ENCODE measurements at regions of chr5 and their contacts with region 1.

Region 1: GRCh38 chr5:157596487-157596886 is 20.9 kb upstream of the ADAM19 start:
- DNase-seq: peak; percentile 54
- ATAC-seq: peak; percentile 62
- H3K4me3 Mint-ChIP-seq: no peak overlapping the region
- H3K27ac Mint-ChIP-seq: peak overlapping the region; percentile 79
- H3K4me1 Mint-ChIP-seq: peaks cover 94% of the 10 kb centered on the region
- H3K27me3 Mint-ChIP-seq: no peaks in the 10 kb centered on the region

Region 2: DNA sequence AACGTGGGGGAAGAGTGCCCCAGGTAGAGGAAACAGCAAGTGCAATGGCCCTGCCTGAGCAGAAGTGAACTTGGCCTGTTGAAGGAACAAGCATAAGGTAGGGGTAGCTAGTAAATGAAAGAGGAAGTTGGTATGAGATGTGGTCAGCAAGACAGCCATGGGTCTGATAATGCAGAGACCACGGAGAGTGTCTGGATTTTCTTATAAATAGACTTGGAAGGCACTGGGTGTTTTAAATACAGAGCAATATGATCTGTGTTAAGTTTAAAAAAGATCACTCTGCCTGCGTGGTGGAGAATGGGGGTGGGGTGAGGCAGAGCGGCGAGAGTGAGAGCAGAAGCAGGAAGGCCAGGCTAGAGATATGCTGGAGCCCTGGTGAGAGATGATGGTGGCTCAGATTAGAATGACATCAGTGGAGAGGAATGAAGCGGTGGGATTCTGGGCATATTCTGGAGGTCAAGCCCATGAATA is 25.1 kb before region 1 on chr5:
- CTCF ChIA-PET with region 1: interaction called, 10 read pairs
- POLR2A ChIA-PET with region 1: no interaction called
- DNase-seq: peak; percentile 68
- ATAC-seq: peak; percentile 59
- H3K4me3 Mint-ChIP-seq: peak overlapping the region; percentile 92
- H3K27ac Mint-ChIP-seq: peak overlapping the region; percentile 92
- H3K4me1 Mint-ChIP-seq: peaks cover 83% of the 10 kb centered on the region
- H3K27me3 Mint-ChIP-seq: peaks cover 3% of the 10 kb centered on the region

Region 3: DNA sequence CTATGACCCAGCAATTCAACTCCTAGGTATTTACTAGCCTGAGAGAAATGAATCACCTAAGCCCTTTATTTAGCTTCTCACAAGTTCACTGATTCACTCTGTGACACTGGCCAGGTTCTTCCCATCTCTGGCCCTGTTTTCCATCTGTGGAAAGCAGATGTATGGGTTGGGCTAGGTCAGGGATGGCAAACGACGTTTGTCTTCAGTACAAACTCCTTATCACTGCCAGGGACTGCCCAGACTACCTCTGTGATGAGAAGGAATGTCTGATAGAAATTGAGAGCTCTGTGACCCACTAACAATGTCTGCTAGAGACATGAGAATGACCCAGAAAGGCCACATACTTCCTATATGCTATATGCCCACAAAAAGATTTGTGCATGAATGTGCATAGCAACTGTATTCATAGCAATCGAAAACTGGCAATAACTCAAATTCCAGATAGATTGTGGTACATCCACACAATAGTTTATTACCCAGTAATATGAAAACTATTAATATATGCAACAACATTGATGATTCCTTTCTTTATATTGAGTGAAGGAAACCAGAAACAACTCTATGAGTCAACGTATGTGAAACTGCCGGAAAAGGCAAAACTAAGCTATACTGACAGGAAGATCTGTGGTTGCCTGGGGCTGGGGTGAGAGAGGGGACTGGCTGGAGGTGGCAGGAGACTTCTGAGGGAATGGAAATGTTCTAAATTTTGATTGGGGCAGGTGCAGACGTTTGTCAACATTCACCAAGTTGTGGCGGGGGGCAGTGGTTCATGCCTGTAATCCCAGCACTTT is 11.1 kb after region 1 on chr5:
- CTCF ChIA-PET with region 1: interaction called, 14 read pairs
- POLR2A ChIA-PET with region 1: interaction called, 5 read pairs
- DNase-seq: peak; percentile 86
- ATAC-seq: peak; percentile 79
- H3K4me3 Mint-ChIP-seq: peak overlapping the region; percentile 15
- H3K27ac Mint-ChIP-seq: peak overlapping the region; percentile 86
- H3K4me1 Mint-ChIP-seq: peaks cover 78% of the 10 kb centered on the region
- H3K27me3 Mint-ChIP-seq: no peaks in the 10 kb centered on the region